ENCODE measurements at regions of chr18 and their contacts with region 1.

Region 1: GRCh38 chr18:22485808-22486244 is 68.1 kb upstream of the CTAGE1 start:
- DNase-seq: no peak
- H3K4me3 ChIP-seq: no peak overlapping the region
- H3K27ac ChIP-seq: no peak overlapping the region
- H3K4me1 ChIP-seq: peaks cover 0 to 20% (median 2%) of the 10 kb centered on the region in 4 donors
- H3K27me3 ChIP-seq: no peaks in the 10 kb centered on the region
- CTCF ChIP-seq: no peak
- EP300 ChIP-seq: no peak
- POLR2A ChIP-seq: no peak

Region 2: GRCh38 chr18:22434973-22435608 is 50.7 kb before region 1 on chr18:
- intact Hi-C with region 1: loop called (anchors 5 kb)
- DNase-seq: peak; percentile 79
- H3K4me3 ChIP-seq: no peak overlapping the region
- H3K27ac ChIP-seq: no peak overlapping the region
- H3K4me1 ChIP-seq: no peaks in the 10 kb centered on the region
- H3K27me3 ChIP-seq: no peaks in the 10 kb centered on the region
- CTCF ChIP-seq: no peak
- EP300 ChIP-seq: no peak
- POLR2A ChIP-seq: no peak

Region 3: GRCh38 chr18:22538426-22538825 is 52.6 kb after region 1 on chr18:
- intact Hi-C with region 1: loop called (anchors 5 kb)
- DNase-seq: no peak
- H3K4me3 ChIP-seq: no peak overlapping the region
- H3K27ac ChIP-seq: peak overlapping the region in 2 of 4 donors; percentile 31 to 40
- H3K4me1 ChIP-seq: peaks cover 0 to 10% (median 8%) of the 10 kb centered on the region in 4 donors
- H3K27me3 ChIP-seq: no peaks in the 10 kb centered on the region
- CTCF ChIP-seq: no peak
- EP300 ChIP-seq: no peak
- POLR2A ChIP-seq: no peak

Measured in esophagus muscularis mucosa (tissue), 4 donors.